Endothelial cell of umbilical vein (primary cell): ENCODE measurements at regions of chr14 and their contacts with region 1.

Region 1: GRCh38 chr14:68824517-68825347 is 31.9 kb upstream of the ZFP36L1 start:
- DNase-seq: peak; percentile 66
- H3K4me3 ChIP-seq: no peak overlapping the region
- H3K27ac ChIP-seq: no peak overlapping the region
- H3K4me1 ChIP-seq: no peaks in the 10 kb centered on the region
- H3K27me3 ChIP-seq: no peaks in the 10 kb centered on the region
- CTCF ChIP-seq: peak; percentile 92 to 95
- POLR2A ChIP-seq: no peak

Region 2: DNA sequence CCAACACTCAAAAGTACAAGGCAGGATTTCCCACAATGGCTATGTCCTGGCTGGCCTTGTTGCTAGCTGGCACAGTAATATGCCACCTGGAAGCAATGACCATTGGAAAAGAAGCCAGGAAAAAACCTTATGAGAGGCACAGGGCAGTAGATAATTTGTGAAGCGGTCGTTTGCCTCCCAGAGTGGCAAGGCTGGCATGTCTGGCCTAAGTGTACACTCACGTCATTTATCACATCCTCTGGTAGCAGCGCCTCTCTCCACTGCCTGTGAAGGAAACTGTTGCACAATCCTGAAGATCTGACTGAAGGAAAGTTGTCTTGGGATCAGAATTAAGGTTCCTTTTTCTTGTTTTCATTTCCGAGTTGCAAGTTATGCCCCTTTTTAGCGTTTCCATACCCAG is 440.4 kb before region 1 on chr14:
- CTCF ChIA-PET with region 1: no interaction called
- POLR2A ChIA-PET with region 1: no interaction called
- dilution Hi-C with region 1: no loop called
- intact Hi-C with region 1: no loop called
- DNase-seq: no peak
- H3K4me3 ChIP-seq: no peak overlapping the region
- H3K27ac ChIP-seq: no peak overlapping the region
- H3K4me1 ChIP-seq: no peaks in the 10 kb centered on the region
- H3K27me3 ChIP-seq: no peaks in the 10 kb centered on the region
- CTCF ChIP-seq: no peak
- POLR2A ChIP-seq: no peak

Region 3: GRCh38 chr14:68843471-68844209 is 18.9 kb after region 1 on chr14:
- CTCF ChIA-PET with region 1: interaction called, 65 read pairs
- POLR2A ChIA-PET with region 1: no interaction called
- dilution Hi-C with region 1: no loop called
- intact Hi-C with region 1: loop called (anchors 1 kb)
- DNase-seq: peak; percentile 75
- H3K4me3 ChIP-seq: no peak overlapping the region
- H3K27ac ChIP-seq: no peak overlapping the region
- H3K4me1 ChIP-seq: peaks cover 14% of the 10 kb centered on the region
- H3K27me3 ChIP-seq: no peaks in the 10 kb centered on the region
- CTCF ChIP-seq: peak; percentile 92 to 95
- POLR2A ChIP-seq: no peak

Region 4: DNA sequence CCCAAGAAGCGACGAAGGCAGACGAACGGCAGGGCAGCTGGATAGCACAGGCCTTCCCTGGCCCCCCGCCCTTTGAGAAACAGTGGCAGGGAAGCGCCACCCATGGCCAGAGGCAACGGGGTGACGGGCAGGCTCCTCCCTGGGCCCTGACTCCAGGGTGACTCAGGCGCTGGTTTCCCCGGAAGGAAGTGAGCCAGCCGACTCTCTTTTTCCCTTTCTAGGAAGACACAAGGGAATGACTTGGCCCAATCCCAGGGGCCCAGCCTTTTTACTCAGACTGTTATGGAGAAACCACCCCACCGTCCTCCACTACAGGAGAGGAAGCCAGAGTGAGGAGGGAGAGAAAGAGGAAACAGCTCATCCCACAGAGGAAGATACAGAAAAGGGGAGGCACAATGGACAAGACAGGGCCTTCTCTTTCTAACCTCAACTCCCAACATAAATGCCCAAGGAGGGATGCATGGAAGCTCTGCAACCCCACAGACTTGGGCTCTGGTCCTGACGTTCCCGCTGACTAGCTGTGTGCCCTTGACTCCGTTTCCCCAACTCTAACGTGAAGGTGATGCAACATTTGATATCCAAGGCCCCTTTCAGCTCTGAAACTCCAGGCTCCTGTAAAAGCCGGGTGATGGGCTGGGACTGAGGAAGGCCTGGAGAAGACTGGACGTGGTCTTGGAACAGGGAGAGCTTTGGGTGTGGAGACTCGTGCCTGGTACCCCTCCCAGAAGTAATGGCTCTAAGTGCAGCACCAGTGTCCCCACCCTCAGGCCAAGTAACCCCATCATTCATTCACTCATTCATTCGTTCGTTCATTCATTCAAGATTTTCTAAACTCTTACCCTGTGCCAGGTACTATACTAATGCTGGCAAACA is 126.5 kb after region 1 on chr14:
- CTCF ChIA-PET with region 1: no interaction called
- POLR2A ChIA-PET with region 1: no interaction called
- dilution Hi-C with region 1: no loop called
- intact Hi-C with region 1: no loop called
- DNase-seq: peak; percentile 74
- H3K4me3 ChIP-seq: no peak overlapping the region
- H3K27ac ChIP-seq: peak overlapping the region; percentile 77
- H3K4me1 ChIP-seq: peaks cover 78% of the 10 kb centered on the region
- H3K27me3 ChIP-seq: no peaks in the 10 kb centered on the region
- CTCF ChIP-seq: no peak
- POLR2A ChIP-seq: no peak

Region 5: DNA sequence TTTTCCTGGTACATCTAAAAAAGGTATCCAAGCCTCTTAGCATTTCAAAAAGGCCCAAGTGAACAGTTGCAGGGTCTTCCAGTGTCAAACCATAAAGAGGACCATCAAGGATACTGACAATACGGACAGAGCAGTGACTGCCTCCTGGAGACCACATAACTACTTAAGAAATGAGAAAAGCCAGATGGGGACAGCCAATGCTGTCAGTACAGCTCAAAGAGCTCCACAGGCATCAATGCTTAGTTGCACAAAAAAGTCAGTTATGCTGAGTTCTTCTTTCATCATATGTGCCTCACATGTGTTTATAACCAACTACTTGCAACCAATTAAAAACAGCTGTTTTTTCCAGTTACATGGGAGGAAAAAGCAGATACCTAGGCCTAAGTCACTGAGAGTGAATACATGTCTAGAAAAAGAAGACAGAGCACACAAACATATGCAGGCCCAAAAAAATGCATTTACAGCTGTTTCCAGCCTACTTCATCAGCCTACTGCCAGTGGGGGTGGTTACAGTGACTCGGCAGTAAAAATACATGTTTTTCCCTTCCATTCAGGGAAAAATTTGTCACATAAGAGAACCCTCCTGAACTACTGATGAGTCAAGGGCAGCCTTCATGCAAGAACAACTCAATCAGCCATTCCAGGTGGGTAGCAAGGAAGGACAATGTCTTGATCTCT is 244.2 kb after region 1 on chr14:
- CTCF ChIA-PET with region 1: no interaction called
- POLR2A ChIA-PET with region 1: no interaction called
- dilution Hi-C with region 1: no loop called
- intact Hi-C with region 1: no loop called
- DNase-seq: peak; percentile 49
- H3K4me3 ChIP-seq: no peak overlapping the region
- H3K27ac ChIP-seq: no peak overlapping the region
- H3K4me1 ChIP-seq: peaks cover 3% of the 10 kb centered on the region
- H3K27me3 ChIP-seq: no peaks in the 10 kb centered on the region
- CTCF ChIP-seq: no peak
- POLR2A ChIP-seq: no peak